ENCODE measurements at regions of chr7 and their contacts with region 1.

Region 1: DNA sequence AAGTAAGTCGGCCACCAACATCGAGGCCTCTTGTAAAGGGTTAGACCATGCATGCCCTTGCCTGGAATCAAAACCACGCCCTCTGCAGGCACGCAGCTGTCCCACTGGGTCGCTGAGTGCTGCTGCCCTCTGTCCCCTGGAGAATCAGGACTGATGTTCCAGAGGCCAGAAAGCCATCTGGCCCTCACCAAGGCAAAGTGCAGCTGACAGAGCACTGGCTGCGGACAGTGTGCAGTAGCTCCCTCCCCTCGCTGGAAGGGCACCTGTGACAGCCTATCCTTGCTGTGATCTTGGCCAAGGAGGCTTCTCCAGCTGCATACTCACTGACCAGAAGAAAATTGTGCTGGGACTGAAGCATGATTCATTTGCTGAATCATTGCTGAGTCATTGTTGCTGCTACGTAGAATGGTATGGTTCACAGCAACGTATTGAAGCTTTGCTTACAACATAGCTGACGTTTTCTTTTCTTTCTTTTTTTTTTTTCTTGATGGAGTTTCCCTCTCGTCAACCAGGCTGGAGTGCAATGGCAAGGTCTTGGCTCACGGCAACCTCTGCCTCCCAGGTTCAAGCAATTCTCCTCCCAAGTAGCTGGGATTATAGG is 30.4 kb downstream of the DDC start:
- DNase-seq: peak; percentile 8
- H3K4me3 Mint-ChIP-seq: no peak overlapping the region
- H3K27ac Mint-ChIP-seq: no peak overlapping the region
- H3K4me1 Mint-ChIP-seq: peaks cover 10% of the 10 kb centered on the region
- H3K27me3 Mint-ChIP-seq: peaks cover 2% of the 10 kb centered on the region

Region 2: GRCh38 chr7:50595491-50596102 is 60.8 kb after region 1 on chr7:
- CTCF ChIA-PET with region 1: no interaction called
- intact Hi-C with region 1: loop called (anchors 5 kb)
- DNase-seq: peak; percentile 16
- H3K4me3 Mint-ChIP-seq: no peak overlapping the region
- H3K27ac Mint-ChIP-seq: no peak overlapping the region
- H3K4me1 Mint-ChIP-seq: peaks cover 15% of the 10 kb centered on the region
- H3K27me3 Mint-ChIP-seq: peaks cover 2% of the 10 kb centered on the region

Measured in activated naive CD4-positive, alpha-beta T cell treated with anti-CD3 and anti-CD28 coated beads for 36 hours (primary cell).